ENCODE measurements at regions of chr9 and their contacts with region 1.

Region 1: GRCh38 chr9:95004411-95005277 is 278.1 kb downstream of the AOPEP start:
- DNase-seq: peak in 1 of 2 donors; percentile 46
- H3K4me3 ChIP-seq: peak overlapping the region; percentile 74 to 88
- H3K27ac ChIP-seq: peak overlapping the region; percentile 96 to 99
- H3K4me1 ChIP-seq: peaks cover 0 to 34% (median 0%) of the 10 kb centered on the region in 4 donors
- H3K27me3 ChIP-seq: no peaks in the 10 kb centered on the region
- CTCF ChIP-seq: no peak

Region 2: DNA sequence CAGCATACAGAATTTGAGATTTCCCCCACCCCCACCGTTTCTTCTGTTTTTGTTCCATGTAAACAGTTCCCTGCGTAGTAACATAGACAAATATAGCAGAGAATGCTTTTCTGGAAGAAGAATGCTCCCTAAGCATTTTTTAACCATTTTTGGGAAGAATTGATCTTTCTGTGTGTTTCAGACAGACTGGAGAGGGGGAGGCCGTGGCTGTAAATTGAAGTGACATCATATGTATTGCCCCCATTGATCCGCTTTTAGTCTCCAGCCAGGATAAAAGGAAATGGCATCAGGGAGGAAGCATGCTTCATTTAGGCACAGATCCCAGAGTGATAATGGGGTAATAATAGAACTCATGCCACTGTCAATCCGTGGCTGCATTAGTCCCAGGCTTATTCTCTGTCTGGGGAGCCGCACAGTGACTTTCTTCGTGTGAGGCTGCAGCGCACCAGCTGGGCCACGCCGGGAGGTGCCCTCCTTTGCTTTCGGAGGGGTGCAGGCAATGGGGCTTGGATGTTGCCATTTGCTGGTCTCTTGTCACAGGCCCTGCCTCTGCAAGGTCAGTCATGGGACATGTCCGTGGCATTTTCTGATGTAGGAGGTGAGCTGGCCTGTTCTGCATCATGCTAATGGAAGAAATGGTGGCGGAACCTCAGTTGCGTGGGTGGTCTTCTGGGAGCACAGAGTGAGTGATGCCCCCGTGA is 51.4 kb after region 1 on chr9:
- intact Hi-C with region 1: loop called (anchors 5 kb)
- DNase-seq: peak in 1 of 2 donors; percentile 78
- H3K4me3 ChIP-seq: peak overlapping the region; percentile 43 to 44
- H3K27ac ChIP-seq: peak overlapping the region; percentile 83 to 93
- H3K4me1 ChIP-seq: peaks cover 0 to 100% (median 43%) of the 10 kb centered on the region in 4 donors
- H3K27me3 ChIP-seq: no peaks in the 10 kb centered on the region
- CTCF ChIP-seq: no peak

Region 3: GRCh38 chr9:95349091-95350038 is 344.7 kb after region 1 on chr9:
- intact Hi-C with region 1: no loop called
- DNase-seq: no peak
- H3K4me3 ChIP-seq: peak overlapping the region in 1 of 2 donors; percentile 38
- H3K27ac ChIP-seq: no peak overlapping the region
- H3K4me1 ChIP-seq: peaks cover 0 to 14% (median 12%) of the 10 kb centered on the region in 4 donors
- H3K27me3 ChIP-seq: peaks cover 0 to 43% of the 10 kb centered on the region in 2 donors
- CTCF ChIP-seq: no peak

Measured in tibial artery (tissue), 4 donors.